Mucosa of descending colon (tissue), 3 donors: ENCODE measurements at regions of chr13 and their contacts with region 1.

Region 1: DNA sequence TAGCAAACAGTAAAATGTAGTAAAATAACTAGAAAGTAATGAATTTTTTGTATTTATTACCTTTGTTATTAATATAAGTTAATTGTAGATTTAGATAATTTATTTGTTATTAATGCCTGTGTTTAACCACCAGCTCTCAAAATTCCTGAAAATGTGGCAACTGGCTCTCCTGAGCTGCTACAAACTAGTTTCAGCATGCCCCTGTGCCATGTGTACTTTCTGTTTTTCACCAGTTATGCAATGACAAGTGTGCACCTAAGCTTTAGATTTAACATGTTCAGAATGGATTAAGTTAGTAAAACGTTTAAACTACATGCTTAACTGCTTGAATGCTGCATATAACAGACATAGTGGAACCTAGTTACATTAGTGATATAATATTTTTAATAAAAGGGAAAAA is 88.1 kb downstream of the POSTN start:
- DNase-seq: no peak
- ATAC-seq: no peak
- H3K4me3 ChIP-seq: no peak overlapping the region
- H3K4me1 ChIP-seq: no peaks in the 10 kb centered on the region
- CTCF ChIP-seq: no peak

Region 2: DNA sequence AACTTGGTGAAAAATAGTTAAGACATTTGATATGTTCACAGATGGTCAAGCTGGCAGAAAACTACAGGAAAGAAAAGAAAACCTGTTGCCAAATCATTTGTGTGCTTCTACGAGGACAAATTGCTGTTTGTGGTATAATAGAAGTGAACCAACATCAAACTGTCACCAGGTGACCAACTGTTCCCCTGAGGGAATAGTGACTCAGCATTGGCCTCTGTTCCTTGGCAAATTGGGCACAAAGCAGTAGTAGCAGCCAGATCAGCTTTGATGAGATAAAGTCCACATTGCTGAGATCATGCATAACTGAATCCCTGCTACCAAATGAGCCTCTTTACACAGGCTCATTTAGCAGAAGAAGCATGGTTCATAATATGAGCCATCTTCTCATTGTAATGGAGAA is 15.4 kb before region 1 on chr13:
- intact Hi-C with region 1: loop called in 1 of 2 experiments (anchors 2 kb)
- DNase-seq: no peak
- ATAC-seq: no peak
- H3K4me3 ChIP-seq: no peak overlapping the region
- H3K4me1 ChIP-seq: no peaks in the 10 kb centered on the region
- CTCF ChIP-seq: no peak

Region 3: DNA sequence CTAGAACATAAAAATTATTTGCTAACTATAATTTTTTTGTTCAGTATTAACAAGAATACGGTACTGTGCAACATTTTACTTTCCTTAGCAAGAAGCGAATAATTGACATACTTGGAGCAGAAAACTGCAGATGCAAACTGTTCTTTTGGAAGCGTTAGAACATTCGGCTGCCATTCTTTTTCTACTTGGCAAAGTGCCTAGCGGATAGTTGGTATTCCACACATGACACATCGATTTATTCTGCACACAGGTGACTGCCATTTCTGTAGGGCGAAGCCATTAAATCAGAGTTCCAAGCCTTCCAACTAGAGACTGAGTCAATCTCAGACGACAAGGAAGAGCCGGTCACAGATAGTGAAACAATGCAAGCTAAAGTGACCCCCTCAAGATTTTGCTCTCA is 241.7 kb after region 1 on chr13:
- intact Hi-C with region 1: no loop called
- DNase-seq: no peak
- ATAC-seq: no peak
- H3K4me3 ChIP-seq: no peak overlapping the region
- H3K4me1 ChIP-seq: no peaks in the 10 kb centered on the region
- CTCF ChIP-seq: no peak